B cell (primary cell): ENCODE measurements at regions of chr14 and their contacts with region 1.

Region 1: GRCh38 chr14:22886500-22887259 is 3.7 kb downstream of the REM2 start:
- DNase-seq: peak; percentile 89
- ATAC-seq: peak; percentile 62
- H3K4me3 ChIP-seq: peak overlapping the region; percentile 44 to 83 (median 67)
- H3K4me3 Mint-ChIP-seq: peak overlapping the region; percentile 97
- H3K27ac ChIP-seq: peak overlapping the region; percentile 85 to 94
- H3K27ac Mint-ChIP-seq: peak overlapping the region; percentile 99
- H3K4me1 ChIP-seq: peaks cover 55 to 83% of the 10 kb centered on the region in 2 donors
- H3K4me1 Mint-ChIP-seq: peaks cover 71% of the 10 kb centered on the region
- H3K27me3 ChIP-seq: no peaks in the 10 kb centered on the region
- H3K27me3 Mint-ChIP-seq: no peaks in the 10 kb centered on the region
- CTCF ChIP-seq: peak; percentile 42

Region 2: DNA sequence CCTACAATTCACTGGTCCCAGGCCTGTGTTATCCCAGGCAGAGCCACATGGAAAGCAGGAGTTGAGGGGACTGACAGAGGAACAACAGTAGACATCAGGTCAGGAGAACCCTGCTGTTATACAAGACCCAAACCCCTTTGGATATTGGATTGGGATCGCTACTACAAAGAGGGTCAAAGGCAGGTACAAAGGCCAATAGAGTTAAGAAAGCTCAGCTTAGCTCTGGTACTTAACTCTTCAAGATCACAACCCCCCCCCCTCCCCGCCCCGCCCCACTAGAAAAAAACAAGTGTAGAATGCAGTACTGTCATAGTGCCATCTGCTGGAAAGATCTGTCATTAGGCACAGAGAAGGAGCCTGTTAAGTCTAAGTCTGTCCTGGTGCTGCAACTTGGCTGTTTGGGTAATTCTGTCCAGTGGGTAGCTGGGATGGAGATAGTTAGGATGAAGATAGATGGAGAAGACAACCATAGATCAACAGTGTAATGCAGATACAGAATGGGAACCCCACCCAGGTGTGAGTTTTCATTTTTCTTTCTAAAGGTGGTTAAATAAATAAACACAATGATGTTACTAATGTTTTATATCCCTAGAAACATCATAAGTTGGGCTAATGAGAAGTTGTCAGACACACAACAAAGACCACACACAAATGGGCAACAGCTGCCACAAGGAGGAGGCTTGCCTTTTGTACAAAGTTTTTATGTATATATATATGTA is 13.6 kb after region 1 on chr14:
- CTCF ChIA-PET with region 1: interaction called, 56 read pairs
- POLR2A ChIA-PET with region 1: interaction called, 19 read pairs
- intact Hi-C with region 1: loop called (anchors 1 kb)
- DNase-seq: peak; percentile 81
- ATAC-seq: peak; percentile 76
- H3K4me3 ChIP-seq: no peak overlapping the region
- H3K4me3 Mint-ChIP-seq: no peak overlapping the region
- H3K27ac ChIP-seq: peak overlapping the region in 1 of 2 donors; percentile 38
- H3K27ac Mint-ChIP-seq: peak overlapping the region; percentile 10
- H3K4me1 ChIP-seq: peaks cover 3 to 6% of the 10 kb centered on the region in 2 donors
- H3K4me1 Mint-ChIP-seq: peaks cover 7% of the 10 kb centered on the region
- H3K27me3 ChIP-seq: no peaks in the 10 kb centered on the region
- H3K27me3 Mint-ChIP-seq: no peaks in the 10 kb centered on the region
- CTCF ChIP-seq: peak; percentile 71

Region 3: DNA sequence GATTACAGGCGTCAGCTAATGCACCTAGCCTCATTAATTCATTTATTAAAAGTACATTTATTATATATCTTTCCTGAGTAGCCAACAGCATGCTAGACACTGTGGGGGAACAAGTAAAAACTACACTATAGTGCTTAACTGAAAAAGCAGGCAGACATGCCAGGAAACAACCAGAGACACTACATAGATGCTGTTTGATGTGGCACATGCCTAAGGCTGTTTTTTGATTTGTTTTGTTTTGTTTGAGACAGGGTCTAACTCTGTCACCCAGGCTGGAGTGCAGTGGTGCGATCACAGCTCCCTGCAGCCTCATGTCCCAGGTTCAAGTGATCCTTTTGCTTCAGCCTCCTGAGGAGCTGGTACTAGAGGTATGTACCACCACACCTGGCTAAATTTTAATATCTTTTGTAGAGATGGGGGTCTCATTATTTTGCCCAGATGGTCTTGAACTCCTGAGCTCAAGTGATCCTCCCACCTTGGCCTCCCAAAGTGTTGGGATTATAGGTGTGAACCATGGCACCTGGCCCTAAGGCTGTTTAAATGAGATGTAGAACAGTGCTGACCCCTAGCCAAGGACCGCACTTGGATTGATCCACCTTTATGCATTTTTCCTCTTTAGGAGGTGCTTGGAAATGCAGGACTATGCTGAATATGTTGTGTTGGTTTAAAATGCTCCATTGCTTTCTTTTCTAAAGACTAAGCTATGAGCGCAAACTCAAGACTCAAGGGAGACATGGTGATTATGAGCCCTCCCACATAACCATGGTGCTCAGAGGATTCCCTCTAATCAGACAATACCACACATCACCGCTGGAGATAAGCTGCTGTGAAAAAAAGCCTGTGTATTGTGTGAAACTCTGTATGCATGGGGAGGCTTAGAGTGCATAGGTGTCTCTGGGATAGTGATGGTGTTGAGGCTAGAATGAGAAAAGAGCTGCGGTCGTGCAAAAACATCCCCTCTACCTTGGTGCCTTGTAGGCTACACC is 133.8 kb after region 1 on chr14:
- CTCF ChIA-PET with region 1: no interaction called
- POLR2A ChIA-PET with region 1: no interaction called
- intact Hi-C with region 1: no loop called
- DNase-seq: no peak
- ATAC-seq: no peak
- H3K4me3 ChIP-seq: no peak overlapping the region
- H3K4me3 Mint-ChIP-seq: no peak overlapping the region
- H3K27ac ChIP-seq: no peak overlapping the region
- H3K27ac Mint-ChIP-seq: no peak overlapping the region
- H3K4me1 ChIP-seq: no peaks in the 10 kb centered on the region
- H3K4me1 Mint-ChIP-seq: no peaks in the 10 kb centered on the region
- H3K27me3 ChIP-seq: no peaks in the 10 kb centered on the region
- H3K27me3 Mint-ChIP-seq: no peaks in the 10 kb centered on the region
- CTCF ChIP-seq: no peak